Mammary epithelial cell (primary cell): ENCODE measurements at regions of chr2 and their contacts with region 1.

Region 1: DNA sequence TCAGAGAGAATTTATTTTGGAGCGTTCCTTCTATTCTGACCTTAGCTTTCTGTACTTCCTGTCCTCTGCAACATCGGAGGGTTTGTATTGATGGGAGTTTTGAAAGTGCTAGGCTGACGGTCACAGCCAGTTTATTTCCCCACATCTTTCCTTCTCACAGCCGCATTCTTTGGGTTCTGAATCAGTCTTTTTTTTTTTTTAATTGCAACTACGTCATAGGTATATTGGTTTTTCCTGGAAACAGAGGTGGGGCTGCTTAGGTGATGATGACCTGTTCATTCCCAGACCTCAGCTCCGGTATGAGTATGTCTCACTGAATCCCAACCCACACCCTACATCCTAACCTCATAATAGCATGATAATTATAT is 88.4 kb downstream of the SOWAHC start:
- DNase-seq: peak; percentile 96
- H3K4me3 ChIP-seq: peak overlapping the region; percentile 20 to 34 (median 32)
- H3K27ac ChIP-seq: peak overlapping the region; percentile 97
- H3K4me1 ChIP-seq: peaks cover 44% of the 10 kb centered on the region
- H3K27me3 ChIP-seq: no peaks in the 10 kb centered on the region
- CTCF ChIP-seq: no peak

Region 2: GRCh38 chr2:109545828-109546713 is 156.5 kb before region 1 on chr2:
- CTCF ChIA-PET with region 1: interaction called, 13 read pairs
- dilution Hi-C with region 1: no loop called
- in situ Hi-C with region 1: no loop called
- intact Hi-C with region 1: no loop called
- DNase-seq: peak; percentile 35
- H3K4me3 ChIP-seq: no peak overlapping the region
- H3K27ac ChIP-seq: no peak overlapping the region
- H3K4me1 ChIP-seq: no peaks in the 10 kb centered on the region
- H3K27me3 ChIP-seq: no peaks in the 10 kb centered on the region
- CTCF ChIP-seq: peak; percentile 94 to 96

Region 3: DNA sequence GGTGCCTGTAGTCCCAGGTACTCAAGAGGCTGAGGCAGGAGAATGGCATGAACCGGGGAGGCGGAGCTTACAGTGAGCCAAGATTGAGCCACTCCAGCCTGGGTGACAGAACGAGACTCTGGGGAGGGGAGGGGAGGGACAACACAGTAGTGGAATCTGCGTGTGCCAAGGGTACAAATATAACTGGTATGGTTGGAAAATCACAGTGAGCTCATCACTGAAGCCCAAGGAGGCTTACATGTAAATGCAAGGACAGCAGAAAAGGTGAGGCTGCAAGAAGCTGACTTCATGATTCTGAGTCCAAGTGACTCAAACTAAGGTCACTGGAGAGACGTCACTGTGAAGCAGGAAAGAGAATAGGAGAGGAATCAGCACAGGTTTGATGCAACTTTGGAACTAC is 98.0 kb before region 1 on chr2:
- CTCF ChIA-PET with region 1: no interaction called
- dilution Hi-C with region 1: no loop called
- in situ Hi-C with region 1: no loop called
- intact Hi-C with region 1: loop called (anchors 2 kb)
- DNase-seq: peak; percentile 95
- H3K4me3 ChIP-seq: no peak overlapping the region
- H3K27ac ChIP-seq: peak overlapping the region; percentile 59
- H3K4me1 ChIP-seq: peaks cover 42% of the 10 kb centered on the region
- H3K27me3 ChIP-seq: no peaks in the 10 kb centered on the region
- CTCF ChIP-seq: no peak

Region 4: DNA sequence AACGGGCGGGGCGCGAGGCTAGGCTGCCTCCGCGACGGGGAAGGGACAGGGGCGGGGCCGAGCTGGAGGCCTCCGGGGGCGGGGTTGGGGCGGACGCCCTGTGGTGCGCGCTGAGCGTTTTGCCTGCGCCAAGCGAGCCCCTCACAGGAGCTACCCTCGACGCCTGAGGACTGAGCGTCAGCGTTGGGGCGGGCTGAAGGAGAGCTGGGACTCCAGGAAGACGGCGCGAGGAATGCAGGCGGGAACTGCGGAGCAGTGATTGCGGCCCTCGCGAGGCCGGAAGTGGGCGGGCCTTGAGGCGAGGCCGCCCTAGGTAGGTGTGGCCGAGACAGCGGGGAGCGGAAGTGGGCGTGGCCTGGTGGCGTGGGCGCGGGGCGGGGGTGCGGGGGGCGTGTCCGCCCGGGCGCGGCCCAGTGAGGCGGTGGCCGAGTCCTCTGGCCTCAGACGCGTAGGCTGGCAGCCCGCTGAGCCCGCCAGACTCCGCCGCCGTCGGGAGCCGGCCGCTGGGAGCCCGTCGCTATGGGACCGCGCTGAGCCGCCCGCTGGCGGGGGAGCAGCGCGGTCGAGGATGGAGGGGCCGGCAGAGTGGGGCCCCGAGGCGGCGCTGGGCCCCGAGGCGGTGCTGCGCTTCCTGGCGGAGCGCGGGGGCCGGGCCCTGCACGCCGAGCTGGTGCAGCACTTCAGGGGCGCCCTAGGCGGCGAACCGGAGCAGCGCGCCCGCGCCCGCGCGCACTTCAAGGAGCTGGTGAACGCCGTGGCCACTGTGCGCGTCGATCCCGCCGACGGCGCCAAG is 88.5 kb before region 1 on chr2 and contains the starts of genes SEPTIN10 and SOWAHC:
- CTCF ChIA-PET with region 1: interaction called, 7 read pairs
- dilution Hi-C with region 1: no loop called
- in situ Hi-C with region 1: loop called in 1 of 2 experiments (anchors 10 kb)
- intact Hi-C with region 1: loop called (anchors 1 kb)
- DNase-seq: peak; percentile 99
- H3K4me3 ChIP-seq: peak within 1 kb of the TSS; percentile 75 to 99 (median 85)
- H3K27ac ChIP-seq: peak within 1 kb of the TSS; percentile 97
- H3K4me1 ChIP-seq: peaks cover 32% of the 10 kb centered on the region
- H3K27me3 ChIP-seq: no peaks in the 10 kb centered on the region
- CTCF ChIP-seq: no peak
- total RNA-seq, gene SEPTIN10: 76.4 to 133 TPM
- total RNA-seq, gene SOWAHC: 32.9 to 120 TPM

Region 5: DNA sequence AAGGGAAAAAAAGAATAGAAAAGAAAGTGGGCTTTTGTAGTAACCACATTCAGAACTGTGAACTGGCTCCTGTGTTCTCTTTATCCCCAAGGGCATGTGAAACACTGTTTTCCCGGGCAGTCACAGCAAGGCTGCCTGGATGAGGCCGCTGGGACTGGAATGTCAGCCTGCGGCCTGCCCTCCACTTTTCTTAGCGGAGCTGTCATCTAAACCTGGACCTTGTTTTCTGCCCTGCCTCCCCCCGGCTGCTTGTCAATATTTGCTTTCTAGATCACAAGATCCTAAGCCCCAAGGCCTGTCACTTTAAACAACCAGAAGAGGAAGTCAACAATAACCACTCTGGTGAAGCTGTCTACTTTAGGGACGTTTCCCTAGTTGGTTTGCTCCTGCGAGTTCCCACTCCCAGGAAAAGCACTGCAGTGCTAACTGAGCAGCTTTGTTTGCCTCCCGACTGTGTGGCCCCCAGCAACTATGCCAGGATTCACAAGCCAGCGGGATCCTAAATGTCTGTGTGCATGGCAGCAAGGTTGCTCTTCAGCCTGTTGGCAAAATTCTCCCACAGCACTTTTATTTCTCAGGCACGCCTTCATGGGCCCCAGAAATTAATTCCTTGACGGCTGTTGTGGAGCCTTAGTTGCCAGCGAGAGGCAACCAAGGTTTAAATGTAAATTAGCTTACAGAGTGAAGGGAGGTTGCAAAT is 57.9 kb before region 1 on chr2:
- CTCF ChIA-PET with region 1: no interaction called
- dilution Hi-C with region 1: loop called (anchors 10 kb)
- in situ Hi-C with region 1: no loop called
- intact Hi-C with region 1: loop called (anchors 5 kb)
- DNase-seq: no peak
- H3K4me3 ChIP-seq: no peak overlapping the region
- H3K27ac ChIP-seq: no peak overlapping the region
- H3K4me1 ChIP-seq: peaks cover 7% of the 10 kb centered on the region
- H3K27me3 ChIP-seq: no peaks in the 10 kb centered on the region
- CTCF ChIP-seq: no peak

Region 6: DNA sequence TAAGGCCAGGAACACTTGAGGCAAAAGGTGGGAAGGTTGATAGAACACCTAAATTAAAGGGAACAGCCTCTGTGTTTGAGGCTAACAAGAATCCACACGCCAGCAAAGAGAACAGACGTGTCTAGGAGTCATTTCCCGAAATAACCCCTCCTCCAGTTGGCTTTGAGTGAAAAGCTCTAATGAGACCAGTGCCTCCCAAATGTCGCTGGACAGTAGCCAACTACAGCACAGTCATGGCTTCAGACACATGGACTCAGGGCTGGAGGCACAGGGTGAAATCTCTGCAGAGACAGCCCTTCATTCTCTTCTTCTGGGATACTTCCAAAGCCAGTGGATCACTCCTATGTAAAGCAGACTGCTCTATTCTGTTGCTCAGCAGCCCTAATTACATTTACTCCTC is 38.9 kb before region 1 on chr2:
- CTCF ChIA-PET with region 1: no interaction called
- dilution Hi-C with region 1: loop called (anchors 5 kb)
- in situ Hi-C with region 1: no loop called
- intact Hi-C with region 1: loop called (anchors 2 kb)
- DNase-seq: peak; percentile 90
- H3K4me3 ChIP-seq: no peak overlapping the region
- H3K27ac ChIP-seq: no peak overlapping the region
- H3K4me1 ChIP-seq: peaks cover 9% of the 10 kb centered on the region
- H3K27me3 ChIP-seq: no peaks in the 10 kb centered on the region
- CTCF ChIP-seq: no peak